ENCODE measurements at regions of chr22 and their contacts with region 1.

Region 1: DNA sequence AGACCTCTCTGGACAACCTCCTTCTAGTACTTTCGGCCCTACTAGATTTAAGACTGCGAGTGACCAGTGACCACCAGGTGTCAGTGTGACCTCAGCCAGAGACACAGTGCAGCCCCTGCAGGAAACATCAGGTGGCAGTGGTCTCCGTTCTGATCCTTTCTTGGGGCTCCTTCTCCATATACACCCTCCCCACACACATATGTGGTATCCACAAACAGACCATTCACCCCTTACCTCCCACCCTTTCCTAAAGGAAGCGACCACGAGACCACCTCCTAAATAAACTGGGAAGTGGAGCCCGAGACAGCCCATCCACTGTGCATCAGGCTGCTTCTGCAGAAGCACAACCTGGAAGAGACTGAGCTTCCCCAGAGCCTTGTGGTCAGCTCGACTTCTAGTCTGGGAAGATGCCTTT is 38.5 kb upstream of the CYP2D6 start:
- DNase-seq: peak; percentile 77 to 82
- H3K4me3 ChIP-seq: no peak overlapping the region
- H3K4me3 Mint-ChIP-seq: no peak overlapping the region
- H3K27ac Mint-ChIP-seq: no peak overlapping the region
- H3K4me1 ChIP-seq: no peaks in the 10 kb centered on the region
- H3K4me1 Mint-ChIP-seq: no peaks in the 10 kb centered on the region
- H3K27me3 ChIP-seq: no peaks in the 10 kb centered on the region
- H3K27me3 Mint-ChIP-seq: no peaks in the 10 kb centered on the region
- CTCF ChIP-seq: peak; percentile 97 to 99

Region 2: DNA sequence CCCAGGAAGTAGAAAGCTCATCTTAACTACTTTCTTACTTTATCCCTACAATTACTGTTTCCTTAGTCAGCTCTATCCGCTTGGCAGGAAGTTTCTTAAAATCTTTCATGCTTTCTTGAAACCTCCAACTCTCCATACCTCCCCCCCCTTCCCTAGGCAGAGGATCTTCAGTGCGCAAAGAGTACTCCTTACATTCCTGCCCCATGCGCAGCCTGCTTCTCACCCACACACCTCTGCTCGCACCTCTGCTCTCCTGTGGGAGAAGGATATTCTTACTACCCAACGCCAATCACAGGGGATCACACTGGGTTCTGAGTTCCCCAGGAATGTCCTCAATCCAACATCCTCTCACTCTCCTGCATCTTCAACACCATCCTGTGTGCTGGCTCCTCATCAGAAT is 89.1 kb after region 1 on chr22:
- CTCF ChIA-PET with region 1: no interaction called
- POLR2A ChIA-PET with region 1: interaction called, 12 read pairs
- intact Hi-C with region 1: no loop called
- DNase-seq: no peak
- H3K4me3 ChIP-seq: no peak overlapping the region
- H3K4me3 Mint-ChIP-seq: no peak overlapping the region
- H3K27ac Mint-ChIP-seq: no peak overlapping the region
- H3K4me1 ChIP-seq: no peaks in the 10 kb centered on the region
- H3K4me1 Mint-ChIP-seq: peaks cover 28% of the 10 kb centered on the region
- H3K27me3 ChIP-seq: no peaks in the 10 kb centered on the region
- H3K27me3 Mint-ChIP-seq: no peaks in the 10 kb centered on the region
- CTCF ChIP-seq: no peak

Region 3: DNA sequence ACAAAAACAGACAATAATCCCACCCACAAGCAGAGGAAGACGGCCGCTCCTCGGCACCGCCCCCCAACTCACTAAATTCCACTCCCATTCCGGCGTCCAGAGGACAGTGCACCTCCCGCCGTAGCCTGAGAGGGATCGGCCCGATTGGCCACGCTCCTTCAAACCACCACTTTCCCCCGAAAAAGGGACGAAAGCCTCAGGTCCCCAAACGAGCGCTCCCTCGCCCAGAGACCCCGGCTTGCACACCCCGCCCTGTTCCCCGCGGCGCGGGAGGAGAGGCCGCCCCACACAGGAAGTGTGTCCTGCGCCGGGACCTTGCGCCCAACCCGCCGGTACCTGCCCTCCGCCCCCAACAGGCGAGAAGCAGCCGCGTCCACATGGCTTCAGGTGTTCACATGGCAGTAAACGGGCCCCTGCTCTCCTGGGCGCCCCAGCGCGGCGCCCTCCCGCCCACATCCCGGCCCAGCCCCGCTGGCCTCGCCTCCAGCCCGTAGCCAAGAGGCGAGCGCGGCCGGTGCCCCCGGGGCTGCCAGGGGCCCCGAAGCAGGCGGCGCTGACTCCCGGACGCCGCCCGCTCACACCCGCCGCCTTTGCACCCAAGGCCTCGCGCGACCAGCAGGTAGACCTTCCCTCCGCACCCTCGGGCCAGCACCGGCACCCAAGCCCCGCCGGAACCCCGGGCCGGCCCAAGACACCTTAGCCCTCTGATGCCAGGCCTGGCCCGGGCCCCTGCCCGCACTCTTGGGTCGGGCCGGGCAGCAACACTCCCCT is 100.5 kb after region 1 on chr22:
- CTCF ChIA-PET with region 1: interaction called, 4 read pairs
- POLR2A ChIA-PET with region 1: no interaction called
- intact Hi-C with region 1: loop called (anchors 1 kb)
- DNase-seq: peak; percentile 87 to 88
- H3K4me3 ChIP-seq: peak overlapping the region; percentile 97
- H3K4me3 Mint-ChIP-seq: peak overlapping the region; percentile 95
- H3K27ac Mint-ChIP-seq: peak overlapping the region; percentile 79
- H3K4me1 ChIP-seq: peaks cover 16% of the 10 kb centered on the region
- H3K4me1 Mint-ChIP-seq: peaks cover 16% of the 10 kb centered on the region
- H3K27me3 ChIP-seq: no peaks in the 10 kb centered on the region
- H3K27me3 Mint-ChIP-seq: no peaks in the 10 kb centered on the region
- CTCF ChIP-seq: peak in 1 of 2 experiments; percentile 39

Measured in Caco-2 (cell line).